Mucosa of descending colon (tissue), 3 donors: ENCODE measurements at regions of chr1 and their contacts with region 1.

Region 1: GRCh38 chr1:197521118-197521739 is 253.2 kb downstream of the CRB1 start:
- DNase-seq: peak in 1 of 3 donors; percentile 50
- ATAC-seq: no peak
- H3K4me3 ChIP-seq: no peak overlapping the region
- H3K4me1 ChIP-seq: no peaks in the 10 kb centered on the region
- CTCF ChIP-seq: no peak

Region 2: DNA sequence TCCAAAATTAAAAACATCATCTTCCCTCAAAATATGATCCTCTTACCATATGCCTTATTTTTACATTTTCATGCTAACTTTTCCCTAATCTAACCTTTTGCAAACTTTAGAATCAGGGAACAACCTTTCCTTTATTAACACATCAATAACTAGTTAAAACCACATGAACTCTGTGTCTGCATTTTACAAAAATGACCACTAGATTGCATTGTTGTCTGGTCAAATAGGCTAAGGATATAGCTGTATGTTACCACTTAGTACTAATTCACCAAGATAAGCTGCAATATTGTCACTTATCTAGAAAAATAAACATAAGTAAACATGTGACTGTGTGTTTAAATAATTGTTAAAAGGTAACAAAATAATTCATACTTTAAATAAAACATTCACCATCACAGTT is 171.7 kb after region 1 on chr1:
- intact Hi-C with region 1: no loop called
- DNase-seq: no peak
- ATAC-seq: peak; percentile 38
- H3K4me3 ChIP-seq: no peak overlapping the region
- H3K4me1 ChIP-seq: peaks cover 10% of the 10 kb centered on the region
- CTCF ChIP-seq: no peak

Region 3: DNA sequence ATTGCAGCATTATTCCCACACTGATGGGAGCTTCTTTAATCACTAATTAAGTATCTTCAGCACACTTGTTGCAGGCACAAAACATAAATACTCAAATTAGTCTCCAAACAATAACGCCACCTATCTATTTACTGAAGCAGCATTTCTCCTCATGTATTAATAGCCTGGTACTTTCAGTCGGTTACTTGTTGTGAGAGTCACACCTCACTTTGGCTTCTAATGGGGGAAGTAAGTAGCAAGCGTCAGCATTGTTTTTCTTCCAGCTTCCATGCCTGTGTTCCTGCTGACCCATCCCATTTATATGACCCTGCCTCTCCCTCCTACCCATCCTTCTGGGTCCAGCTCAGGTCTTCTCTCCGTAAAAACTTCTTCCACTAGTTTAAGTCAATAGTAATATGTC is 286.0 kb after region 1 on chr1:
- intact Hi-C with region 1: no loop called
- DNase-seq: no peak
- ATAC-seq: peak; percentile 78
- H3K4me3 ChIP-seq: no peak overlapping the region
- H3K4me1 ChIP-seq: peaks cover 12% of the 10 kb centered on the region
- CTCF ChIP-seq: no peak

Region 4: DNA sequence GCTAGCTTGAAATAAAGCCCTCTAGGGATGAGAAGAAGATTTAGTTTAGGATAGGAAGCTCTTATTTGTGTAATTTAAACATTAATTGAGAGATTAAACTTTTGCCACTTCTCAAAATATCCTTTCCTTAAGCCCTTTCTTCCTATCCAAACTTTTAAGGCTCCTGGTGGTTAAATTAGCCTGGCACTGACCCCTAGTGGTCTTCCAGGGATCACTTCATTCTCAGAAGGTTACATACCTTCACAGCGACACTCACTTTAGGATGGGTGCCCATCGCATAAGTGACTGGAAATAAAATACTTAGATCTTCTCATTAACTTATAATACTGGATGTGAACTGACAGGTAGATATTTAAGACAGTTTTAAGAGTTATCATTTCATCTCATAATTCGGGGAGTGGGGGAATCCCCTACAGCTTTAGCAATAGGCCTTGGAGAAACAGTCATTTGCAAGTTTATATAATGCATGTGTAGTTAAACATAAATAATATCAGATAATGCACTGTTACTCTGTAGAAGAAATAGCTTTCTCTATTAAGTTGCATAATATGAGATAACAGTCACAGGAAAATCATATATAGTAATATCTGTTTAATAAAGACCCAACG is 403.4 kb after region 1 on chr1:
- intact Hi-C with region 1: loop called in 1 of 2 experiments (anchors 10 kb)
- DNase-seq: peak in 1 of 3 donors; percentile 67
- ATAC-seq: peak; percentile 64
- H3K4me3 ChIP-seq: no peak overlapping the region
- H3K4me1 ChIP-seq: peaks cover 11% of the 10 kb centered on the region
- CTCF ChIP-seq: no peak